ENCODE measurements at regions of chr14 and their contacts with region 1.

Region 1: DNA sequence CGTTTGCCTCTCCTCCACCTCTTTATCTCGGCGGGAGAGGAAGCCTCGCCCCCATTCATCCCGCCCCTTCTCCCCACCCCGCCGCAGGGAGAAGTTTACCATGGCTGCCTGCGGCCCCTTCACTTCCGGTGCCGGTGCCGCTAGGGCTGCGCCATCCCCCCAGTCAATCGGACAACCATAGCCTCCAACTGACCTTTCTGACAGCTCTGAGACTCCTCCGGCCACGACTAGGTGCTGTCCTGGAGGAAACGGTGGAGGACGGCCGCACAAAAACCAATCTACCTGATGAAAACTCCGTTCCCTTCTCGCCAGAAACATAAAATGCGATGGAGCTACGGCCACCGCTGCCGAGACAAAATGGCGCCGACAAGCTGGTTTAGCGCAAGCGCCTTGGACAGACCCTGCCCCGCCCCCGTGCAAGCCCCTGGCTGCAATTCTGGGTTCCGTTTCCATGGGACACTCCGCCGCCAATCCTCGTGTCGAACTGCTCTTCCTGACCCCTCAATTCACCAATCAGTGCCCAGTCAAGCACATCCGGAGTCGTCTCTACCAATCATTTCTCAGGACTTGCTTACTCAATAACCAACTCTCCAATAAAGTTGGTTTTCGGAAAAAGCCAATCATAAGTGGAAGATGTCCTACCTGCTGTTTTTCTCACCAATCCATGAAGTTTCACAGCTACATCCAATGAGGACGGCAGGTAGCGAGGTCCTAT is 436 bp upstream of the ARID4A start:
- DNase-seq: peak; percentile 90 to 100 (median 99)
- ATAC-seq: peak; percentile 91
- H3K4me3 ChIP-seq: peak overlapping the region; percentile 91
- H3K4me3 Mint-ChIP-seq: no peak overlapping the region
- H3K27ac ChIP-seq: peak overlapping the region; percentile 94
- H3K27ac Mint-ChIP-seq: no peak overlapping the region
- H3K4me1 ChIP-seq: peaks cover 17 to 23% of the 10 kb centered on the region in 2 donors
- H3K4me1 Mint-ChIP-seq: peaks cover 36 to 64% (median 55%) of the 10 kb centered on the region in 7 donors
- H3K27me3 ChIP-seq: no peaks in the 10 kb centered on the region
- H3K27me3 Mint-ChIP-seq: no peaks in the 10 kb centered on the region

Region 2: DNA sequence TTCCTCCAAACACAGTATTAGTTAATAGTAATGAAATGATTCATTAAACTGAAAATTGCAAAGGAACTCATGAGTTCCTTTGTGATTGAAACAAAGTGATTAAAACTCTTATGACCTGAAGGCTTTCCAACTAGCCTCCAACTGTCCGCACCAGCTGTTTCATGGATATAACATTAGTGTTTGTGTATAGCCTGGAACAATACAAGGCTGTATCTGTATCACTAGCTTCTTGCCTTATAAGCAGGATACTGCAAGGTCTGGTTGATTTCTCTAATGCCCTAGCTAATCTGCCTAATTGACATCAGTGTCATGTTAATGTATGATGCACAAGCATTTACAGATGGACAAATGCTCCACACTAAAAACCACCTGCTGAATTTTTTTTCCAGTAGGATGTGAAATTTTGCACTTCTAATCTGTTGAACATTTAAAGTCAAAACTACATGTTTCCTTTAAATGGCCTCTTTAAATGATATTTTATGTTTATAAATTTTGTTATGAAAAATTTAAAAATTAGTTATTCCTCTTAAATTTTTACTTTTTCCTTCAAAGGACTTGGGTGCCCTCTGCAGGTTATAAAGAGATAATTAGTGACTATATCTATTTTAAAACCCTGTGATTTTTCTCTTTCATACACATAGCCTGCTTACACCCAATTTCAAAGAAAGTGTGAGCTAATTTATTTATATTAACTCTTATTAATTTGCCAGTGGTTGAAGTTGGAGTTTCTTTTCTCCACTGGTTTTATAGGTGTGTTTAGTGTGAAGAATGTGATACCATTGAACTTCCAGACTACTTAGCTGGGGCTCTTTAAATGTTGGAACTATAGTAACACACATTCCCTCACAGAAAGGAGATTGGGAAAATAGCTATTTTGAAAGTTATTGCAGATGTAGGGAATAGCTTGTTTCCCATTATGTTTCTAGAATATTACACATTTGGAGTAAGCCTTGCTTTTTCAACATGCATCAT is 1003.8 kb before region 1 on chr14:
- CTCF ChIA-PET with region 1: no interaction called
- POLR2A ChIA-PET with region 1: no interaction called
- intact Hi-C with region 1: no loop called
- DNase-seq: peak in 2 of 9 donors; percentile 2 to 7
- ATAC-seq: no peak
- H3K4me3 ChIP-seq: no peak overlapping the region
- H3K4me3 Mint-ChIP-seq: no peak overlapping the region
- H3K27ac ChIP-seq: no peak overlapping the region
- H3K27ac Mint-ChIP-seq: no peak overlapping the region
- H3K4me1 ChIP-seq: no peaks in the 10 kb centered on the region
- H3K4me1 Mint-ChIP-seq: no peaks in the 10 kb centered on the region
- H3K27me3 ChIP-seq: no peaks in the 10 kb centered on the region
- H3K27me3 Mint-ChIP-seq: no peaks in the 10 kb centered on the region

Region 3: DNA sequence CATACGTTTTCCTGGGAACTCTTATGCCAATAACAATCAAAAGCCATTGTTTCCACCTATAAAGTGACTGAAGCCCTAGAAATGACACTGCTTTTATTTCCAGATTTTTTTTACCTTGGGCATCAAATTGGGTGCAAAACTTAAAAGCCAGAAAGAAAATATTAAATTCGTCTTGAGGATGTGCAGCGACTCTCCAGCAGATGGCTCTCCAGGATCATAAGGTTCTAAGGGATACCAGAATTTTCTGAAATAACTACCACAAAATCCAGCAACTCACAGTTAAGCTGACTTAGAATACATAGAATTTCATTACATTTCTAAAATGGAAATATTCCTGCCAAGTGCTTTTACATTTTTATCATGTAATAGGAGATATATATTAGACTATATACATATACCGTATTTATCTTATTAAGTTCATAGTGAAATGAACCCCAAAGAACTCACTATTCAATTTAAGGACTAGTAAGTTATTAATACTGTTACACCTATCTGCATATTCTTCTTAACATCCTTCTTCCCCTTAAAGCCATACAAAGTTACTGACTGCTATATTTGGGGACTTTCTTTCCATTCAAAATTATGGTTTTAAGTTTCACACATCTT is 189.9 kb before region 1 on chr14:
- CTCF ChIA-PET with region 1: no interaction called
- POLR2A ChIA-PET with region 1: no interaction called
- intact Hi-C with region 1: loop called in 1 of 2 experiments (anchors 5 kb)
- DNase-seq: peak in 7 of 9 donors; percentile 23 to 55 (median 29)
- ATAC-seq: peak; percentile 45
- H3K4me3 ChIP-seq: no peak overlapping the region
- H3K4me3 Mint-ChIP-seq: no peak overlapping the region
- H3K27ac ChIP-seq: no peak overlapping the region
- H3K27ac Mint-ChIP-seq: no peak overlapping the region
- H3K4me1 ChIP-seq: no peaks in the 10 kb centered on the region
- H3K4me1 Mint-ChIP-seq: no peaks in the 10 kb centered on the region
- H3K27me3 ChIP-seq: peaks cover 0 to 2% of the 10 kb centered on the region in 2 donors
- H3K27me3 Mint-ChIP-seq: peaks cover 4 to 44% (median 15%) of the 10 kb centered on the region in 5 donors

Region 4: DNA sequence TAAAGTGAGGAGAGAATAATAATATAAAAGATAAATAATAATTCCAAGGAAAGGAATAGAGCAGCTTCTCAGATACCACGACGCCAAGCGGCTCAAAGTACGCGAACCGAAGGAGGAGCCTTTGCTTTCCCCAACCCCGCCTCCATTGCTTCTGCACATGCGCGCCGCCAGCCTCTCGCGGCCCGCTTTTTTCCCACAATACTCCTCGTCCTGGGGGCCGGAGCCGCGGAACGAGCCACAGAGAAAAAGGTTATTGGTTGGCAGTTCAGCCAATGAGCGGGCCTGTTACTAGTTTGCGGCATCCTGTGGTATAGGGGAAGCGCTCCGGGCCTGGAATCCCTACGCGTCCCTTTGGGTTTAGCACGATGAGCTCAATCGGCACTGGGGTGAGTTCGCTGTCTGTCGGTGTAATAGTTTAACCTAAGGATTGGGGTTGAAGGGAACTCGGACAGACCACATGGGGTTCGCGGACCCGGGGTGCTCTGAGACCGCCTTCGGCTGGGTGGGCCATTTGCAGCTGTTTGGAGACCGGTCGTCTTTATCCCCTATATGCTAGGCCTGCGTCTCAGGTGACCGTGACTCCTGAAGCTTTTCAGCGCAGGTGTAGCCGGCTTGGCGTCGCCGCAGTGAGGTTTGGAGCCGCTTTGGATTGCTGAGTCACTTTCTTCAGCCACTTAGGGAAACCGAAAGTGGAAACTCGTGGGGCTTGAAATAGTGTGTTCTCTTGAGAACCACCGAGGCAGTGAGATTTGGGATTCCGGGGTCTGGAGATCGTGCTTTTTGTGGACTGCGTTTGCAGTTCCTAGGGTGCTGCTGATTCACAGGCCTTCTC is 53.1 kb before region 1 on chr14 and contains the start of gene PSMA3:
- CTCF ChIA-PET with region 1: no interaction called
- POLR2A ChIA-PET with region 1: interaction called, 63 read pairs
- intact Hi-C with region 1: loop called (anchors 1 kb)
- DNase-seq: peak; percentile 95 to 98 (median 98)
- ATAC-seq: peak; percentile 96
- H3K4me3 ChIP-seq: peak within 1 kb of the TSS; percentile 100
- H3K4me3 Mint-ChIP-seq: peak within 1 kb of the TSS; percentile 89 to 99 (median 96)
- H3K27ac ChIP-seq: peak within 1 kb of the TSS; percentile 86
- H3K27ac Mint-ChIP-seq: peak within 1 kb of the TSS; percentile 97 to 99 (median 98)
- H3K4me1 ChIP-seq: peaks cover 23 to 26% of the 10 kb centered on the region in 2 donors
- H3K4me1 Mint-ChIP-seq: peaks cover 27 to 61% (median 52%) of the 10 kb centered on the region in 7 donors
- H3K27me3 ChIP-seq: no peaks in the 10 kb centered on the region
- H3K27me3 Mint-ChIP-seq: peaks cover 0 to 1% (median 0%) of the 10 kb centered on the region in 5 donors
- total RNA-seq, gene PSMA3: 76.5 to 357 (median 97.1) TPM

Region 5: GRCh38 chr14:58287607-58288042 is 10.3 kb before region 1 on chr14:
- CTCF ChIA-PET with region 1: no interaction called
- POLR2A ChIA-PET with region 1: interaction called, 24 read pairs
- intact Hi-C with region 1: loop called in 1 of 2 experiments (anchors 1 kb)
- DNase-seq: no peak
- ATAC-seq: no peak
- H3K4me3 ChIP-seq: no peak overlapping the region
- H3K4me3 Mint-ChIP-seq: peak overlapping the region in 2 of 10 donors; percentile 7 to 28
- H3K27ac ChIP-seq: no peak overlapping the region
- H3K27ac Mint-ChIP-seq: peak overlapping the region in 7 of 9 donors; percentile 15 to 87 (median 45)
- H3K4me1 ChIP-seq: peaks cover 10 to 29% of the 10 kb centered on the region in 2 donors
- H3K4me1 Mint-ChIP-seq: peaks cover 38 to 86% (median 76%) of the 10 kb centered on the region in 7 donors
- H3K27me3 ChIP-seq: no peaks in the 10 kb centered on the region
- H3K27me3 Mint-ChIP-seq: no peaks in the 10 kb centered on the region

Region 6: DNA sequence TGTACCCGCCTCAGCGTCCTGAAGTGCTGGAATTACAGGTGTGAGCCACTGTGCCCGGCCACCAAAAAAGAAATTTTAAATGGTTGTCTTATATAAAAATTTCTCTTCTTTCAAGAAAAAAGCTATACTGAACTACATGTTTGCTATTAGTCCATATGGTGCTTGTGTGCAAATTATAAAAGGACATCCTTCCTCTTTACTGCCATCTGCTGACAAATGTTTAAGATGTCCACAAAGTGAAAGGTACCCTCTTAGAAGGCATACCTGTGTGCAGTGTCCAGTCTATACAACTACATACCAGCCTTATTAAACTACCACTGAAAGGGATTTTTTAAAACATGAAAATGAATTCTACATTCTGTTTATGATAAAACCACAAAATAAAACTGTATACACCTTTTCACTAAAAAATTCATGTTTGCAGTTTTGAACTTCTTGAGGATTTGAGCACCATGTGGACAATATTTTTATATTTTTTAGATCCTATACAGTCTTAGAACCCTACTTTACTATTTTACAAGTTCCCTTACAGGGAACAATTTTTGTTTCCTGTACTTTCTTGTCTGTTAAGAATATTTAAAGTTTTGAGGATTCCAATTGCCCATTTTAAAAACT is 65.0 kb after region 1 on chr14:
- CTCF ChIA-PET with region 1: no interaction called
- POLR2A ChIA-PET with region 1: interaction called, 4 read pairs
- intact Hi-C with region 1: loop called (anchors 1 to 2 kb)
- DNase-seq: peak in 6 of 9 donors; percentile 2 to 55 (median 34)
- ATAC-seq: peak; percentile 63
- H3K4me3 ChIP-seq: no peak overlapping the region
- H3K4me3 Mint-ChIP-seq: no peak overlapping the region
- H3K27ac ChIP-seq: no peak overlapping the region
- H3K27ac Mint-ChIP-seq: no peak overlapping the region
- H3K4me1 ChIP-seq: no peaks in the 10 kb centered on the region
- H3K4me1 Mint-ChIP-seq: peaks cover 0 to 6% (median 0%) of the 10 kb centered on the region in 7 donors
- H3K27me3 ChIP-seq: no peaks in the 10 kb centered on the region
- H3K27me3 Mint-ChIP-seq: no peaks in the 10 kb centered on the region

Region 7: GRCh38 chr14:58637391-58638230 is 339.7 kb after region 1 on chr14 and contains the start of gene DACT1:
- CTCF ChIA-PET with region 1: no interaction called
- POLR2A ChIA-PET with region 1: no interaction called
- intact Hi-C with region 1: loop called in 1 of 2 experiments (anchors 1 kb)
- DNase-seq: peak; percentile 45 to 74 (median 64)
- ATAC-seq: peak; percentile 80
- H3K4me3 ChIP-seq: peak within 1 kb of the TSS; percentile 80
- H3K4me3 Mint-ChIP-seq: peak within 1 kb of the TSS; percentile 89 to 99 (median 98)
- H3K27ac ChIP-seq: peak within 1 kb of the TSS; percentile 61
- H3K27ac Mint-ChIP-seq: peak within 1 kb of the TSS; percentile 84 to 95 (median 91)
- H3K4me1 ChIP-seq: peaks cover 0 to 22% of the 10 kb centered on the region in 2 donors
- H3K4me1 Mint-ChIP-seq: peaks cover 20 to 61% (median 45%) of the 10 kb centered on the region in 7 donors
- H3K27me3 ChIP-seq: no peaks in the 10 kb centered on the region
- H3K27me3 Mint-ChIP-seq: peaks cover 0 to 44% (median 6%) of the 10 kb centered on the region in 5 donors
- total RNA-seq, gene DACT1: 8.2 to 32.3 (median 15.0) TPM

Measured in naive thymus-derived CD4-positive, alpha-beta T cell (primary cell).